AG04449 (cell line): ENCODE measurements at regions of chr7 and their contacts with region 1.

Region 1: GRCh38 chr7:116258734-116259133 is 48.4 kb downstream of the TES start:
- DNase-seq: no peak
- H3K4me3 ChIP-seq: no peak overlapping the region
- CTCF ChIP-seq: peak; percentile 31

Region 2: GRCh38 chr7:115996911-115997615 is 261.7 kb before region 1 on chr7:
- CTCF ChIA-PET with region 1: no interaction called
- POLR2A ChIA-PET with region 1: no interaction called
- DNase-seq: no peak
- H3K4me3 ChIP-seq: no peak overlapping the region
- CTCF ChIP-seq: no peak

Region 3: DNA sequence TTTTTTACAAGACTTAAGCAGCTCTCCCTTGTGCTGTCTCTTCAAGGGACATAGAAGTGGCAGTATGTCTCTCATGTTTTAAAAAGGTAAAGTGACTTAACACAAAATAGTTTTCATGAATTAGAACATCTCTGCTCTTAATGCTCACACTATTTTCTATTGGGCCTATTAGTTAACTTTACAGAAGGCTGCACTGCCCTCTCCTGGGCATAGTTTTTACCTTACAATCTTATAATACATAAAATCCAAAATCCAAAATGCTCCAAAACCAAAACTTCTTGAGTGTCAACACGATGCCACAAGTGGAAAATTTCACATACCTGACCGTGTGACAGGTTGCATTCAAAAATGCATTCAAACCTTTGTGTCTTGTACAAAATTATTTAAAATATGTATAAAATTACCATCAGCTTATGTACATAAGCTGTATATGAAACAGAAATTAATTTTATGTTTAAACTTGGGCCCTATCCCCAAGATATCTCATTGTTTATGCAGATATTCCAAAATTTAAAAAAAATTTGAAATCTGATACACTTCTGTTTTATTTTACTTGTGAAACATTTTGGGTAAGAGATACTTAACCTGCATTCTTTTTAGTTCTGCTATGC is 22.6 kb before region 1 on chr7:
- CTCF ChIA-PET with region 1: interaction called, 215 read pairs
- POLR2A ChIA-PET with region 1: no interaction called
- DNase-seq: no peak
- H3K4me3 ChIP-seq: no peak overlapping the region
- CTCF ChIP-seq: peak; percentile 8

Region 4: GRCh38 chr7:116399819-116400218 is 141.1 kb after region 1 on chr7:
- CTCF ChIA-PET with region 1: interaction called, 11 read pairs
- POLR2A ChIA-PET with region 1: no interaction called
- DNase-seq: peak; percentile 21
- H3K4me3 ChIP-seq: no peak overlapping the region
- CTCF ChIP-seq: no peak

Region 5: GRCh38 chr7:116505278-116505677 is 246.5 kb after region 1 on chr7:
- CTCF ChIA-PET with region 1: interaction called, 16 read pairs
- POLR2A ChIA-PET with region 1: no interaction called
- DNase-seq: no peak
- H3K4me3 ChIP-seq: no peak overlapping the region
- CTCF ChIP-seq: no peak